ENCODE measurements at regions of chr10 and their contacts with region 1.

Region 1: DNA sequence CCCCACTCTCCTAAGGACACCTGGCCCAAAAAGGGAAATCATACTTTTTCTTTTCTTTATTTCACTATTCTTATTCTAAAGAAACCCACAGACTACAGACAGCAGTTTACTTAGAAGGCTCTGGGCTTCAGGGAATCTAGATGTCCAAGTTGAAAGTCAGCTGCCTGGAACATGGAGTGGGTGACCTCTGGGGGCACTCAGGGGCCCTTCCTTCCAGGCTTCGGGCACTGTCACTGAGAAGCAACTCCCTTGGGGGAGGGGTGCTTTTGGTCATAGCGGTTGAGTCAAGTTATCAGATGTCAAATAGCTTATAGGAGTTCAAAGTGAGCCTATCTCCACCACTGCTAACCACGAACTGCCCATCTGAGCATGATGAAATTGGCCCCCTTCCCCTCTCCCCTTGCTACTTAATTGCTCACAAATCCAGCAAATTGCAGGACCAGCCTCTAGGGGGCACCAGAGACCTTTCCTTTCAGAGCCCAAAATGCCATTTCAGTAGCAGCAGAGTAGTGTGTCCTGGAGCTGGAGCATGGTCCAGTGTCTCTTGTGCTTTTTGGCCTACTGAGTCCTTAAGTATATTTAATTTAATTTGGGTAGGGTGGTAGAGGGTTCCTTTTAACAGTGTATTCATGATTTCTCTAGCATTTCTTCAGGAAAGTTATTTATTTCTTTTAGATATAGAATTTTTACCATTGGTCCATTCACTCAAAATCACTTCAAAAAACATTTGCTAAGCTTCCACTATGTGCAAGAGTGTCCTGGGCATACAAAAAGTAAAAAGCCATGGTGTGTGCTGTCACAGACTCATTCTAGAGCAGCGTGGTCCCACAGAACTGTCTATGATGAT is 463.8 kb downstream of the KCNMA1 start:
- DNase-seq: peak; percentile 55 to 93 (median 77)
- H3K4me3 ChIP-seq: no peak overlapping the region
- H3K27ac ChIP-seq: no peak overlapping the region
- H3K4me1 ChIP-seq: no peaks in the 10 kb centered on the region
- H3K27me3 ChIP-seq: no peaks in the 10 kb centered on the region
- CTCF ChIP-seq: peak; percentile 85 to 92 (median 91)
- POLR2A ChIP-seq: no peak

Region 2: GRCh38 chr10:77391605-77392235 is 217.9 kb after region 1 on chr10:
- intact Hi-C with region 1: loop called (anchors 10 kb)
- DNase-seq: peak; percentile 69 to 87 (median 80)
- H3K4me3 ChIP-seq: no peak overlapping the region
- H3K27ac ChIP-seq: peak overlapping the region in 1 of 5 donors; percentile 47
- H3K4me1 ChIP-seq: peaks cover 0 to 7% of the 10 kb centered on the region in 2 donors
- H3K27me3 ChIP-seq: no peaks in the 10 kb centered on the region
- CTCF ChIP-seq: peak; percentile 55 to 73 (median 66)
- POLR2A ChIP-seq: no peak

Region 3: GRCh38 chr10:77494327-77494726 is 320.5 kb after region 1 on chr10:
- intact Hi-C with region 1: loop called in 1 of 2 experiments (anchors 10 kb)
- DNase-seq: no peak
- H3K4me3 ChIP-seq: no peak overlapping the region
- H3K27ac ChIP-seq: no peak overlapping the region
- H3K4me1 ChIP-seq: peaks cover 0 to 8% of the 10 kb centered on the region in 2 donors
- H3K27me3 ChIP-seq: no peaks in the 10 kb centered on the region
- CTCF ChIP-seq: peak in 4 of 6 experiments; percentile 6 to 24 (median 19)
- POLR2A ChIP-seq: no peak

Region 4: GRCh38 chr10:77710759-77711682 is 537.2 kb after region 1 on chr10:
- intact Hi-C with region 1: loop called in 1 of 2 experiments (anchors 10 kb)
- DNase-seq: peak; percentile 40 to 86 (median 81)
- H3K4me3 ChIP-seq: peak overlapping the region in 2 of 4 donors; percentile 29 to 62
- H3K27ac ChIP-seq: no peak overlapping the region
- H3K4me1 ChIP-seq: peaks cover 3 to 6% of the 10 kb centered on the region in 2 donors
- H3K27me3 ChIP-seq: peaks cover 6% of the 10 kb centered on the region
- CTCF ChIP-seq: peak; percentile 76 to 98 (median 94)
- POLR2A ChIP-seq: no peak

Measured in adrenal gland (tissue), 19 donors.